ENCODE measurements at regions of chr5 and their contacts with region 1.

Region 1: GRCh38 chr5:95781101-95781583 is 41.4 kb downstream of the GLRX start:
- DNase-seq: peak; percentile 46 to 86 (median 73)
- ATAC-seq: peak; percentile 97
- H3K4me3 ChIP-seq: peak overlapping the region in 1 of 2 experiments; percentile 43
- H3K4me3 Mint-ChIP-seq: peak overlapping the region; percentile 78
- H3K27ac ChIP-seq: no peak overlapping the region
- H3K27ac Mint-ChIP-seq: peak overlapping the region; percentile 68
- H3K4me1 ChIP-seq: peaks cover 10% of the 10 kb centered on the region
- H3K4me1 Mint-ChIP-seq: peaks cover 14% of the 10 kb centered on the region
- H3K27me3 ChIP-seq: no peaks in the 10 kb centered on the region
- H3K27me3 Mint-ChIP-seq: no peaks in the 10 kb centered on the region
- CTCF ChIP-seq: peak; percentile 99

Region 2: DNA sequence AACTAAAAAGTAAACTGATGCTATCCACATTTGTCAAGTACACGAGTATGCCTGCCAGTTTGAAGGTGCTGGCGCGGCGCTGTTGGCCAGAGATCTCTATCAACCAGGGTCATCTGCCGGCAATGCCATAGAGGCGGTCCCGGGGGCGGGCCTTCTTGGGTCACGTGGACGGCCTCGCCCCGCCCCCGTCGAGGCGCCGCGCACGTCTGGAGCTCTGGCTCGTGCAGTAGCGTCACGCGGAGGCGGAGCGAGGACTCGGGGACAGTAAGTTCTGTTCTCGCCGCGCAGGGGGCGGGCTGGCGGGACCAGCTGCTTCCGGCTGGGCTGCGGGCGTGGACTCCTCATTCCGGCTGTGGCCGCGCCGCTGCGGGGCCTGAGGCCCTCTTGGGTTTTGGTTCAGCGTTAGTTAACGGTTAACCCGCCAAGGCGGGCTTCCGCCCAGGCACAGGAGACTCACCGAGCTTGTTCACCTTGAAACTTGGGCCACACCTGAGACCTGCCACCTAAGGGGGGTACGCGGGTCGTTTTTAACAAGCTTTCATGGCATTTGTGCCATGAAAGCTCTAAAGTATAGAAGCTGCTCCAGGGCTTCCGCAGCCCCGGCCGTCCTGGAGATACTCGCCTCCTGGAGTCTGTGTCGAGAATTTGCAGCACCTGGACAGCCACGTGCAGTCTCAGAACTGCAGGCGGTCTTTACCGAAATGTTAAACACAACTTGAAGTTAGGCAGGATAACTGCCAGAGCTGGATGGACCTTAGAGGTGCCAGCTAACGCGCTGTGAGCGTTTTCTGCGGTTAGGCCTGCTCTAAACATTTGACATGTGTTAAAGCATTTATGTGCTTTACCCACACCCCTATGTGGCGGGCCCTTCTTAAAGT is 134.3 kb before region 1 on chr5 and contains the start of gene RFESD:
- CTCF ChIA-PET with region 1: interaction called, 35 read pairs
- POLR2A ChIA-PET with region 1: no interaction called
- intact Hi-C with region 1: loop called in 1 of 2 experiments (anchors 1 kb)
- DNase-seq: peak; percentile 86 to 96 (median 93)
- ATAC-seq: peak; percentile 93
- H3K4me3 ChIP-seq: peak within 1 kb of the TSS; percentile 67 to 77
- H3K4me3 Mint-ChIP-seq: peak within 1 kb of the TSS; percentile 91
- H3K27ac ChIP-seq: peak within 1 kb of the TSS; percentile 76 to 85
- H3K27ac Mint-ChIP-seq: peak within 1 kb of the TSS; percentile 94
- H3K4me1 ChIP-seq: peaks cover 20% of the 10 kb centered on the region
- H3K4me1 Mint-ChIP-seq: peaks cover 40% of the 10 kb centered on the region
- H3K27me3 ChIP-seq: no peaks in the 10 kb centered on the region
- H3K27me3 Mint-ChIP-seq: no peaks in the 10 kb centered on the region
- CTCF ChIP-seq: peak; percentile 22
- total RNA-seq, gene RFESD: 1.00 to 1.7 TPM

Region 3: GRCh38 chr5:95794070-95794516 is 13.0 kb after region 1 on chr5:
- CTCF ChIA-PET with region 1: interaction called, 54 read pairs
- POLR2A ChIA-PET with region 1: no interaction called
- intact Hi-C with region 1: no loop called
- DNase-seq: no peak
- ATAC-seq: no peak
- H3K4me3 ChIP-seq: no peak overlapping the region
- H3K4me3 Mint-ChIP-seq: no peak overlapping the region
- H3K27ac ChIP-seq: no peak overlapping the region
- H3K27ac Mint-ChIP-seq: no peak overlapping the region
- H3K4me1 ChIP-seq: no peaks in the 10 kb centered on the region
- H3K4me1 Mint-ChIP-seq: no peaks in the 10 kb centered on the region
- H3K27me3 ChIP-seq: no peaks in the 10 kb centered on the region
- H3K27me3 Mint-ChIP-seq: no peaks in the 10 kb centered on the region
- CTCF ChIP-seq: no peak

Region 4: DNA sequence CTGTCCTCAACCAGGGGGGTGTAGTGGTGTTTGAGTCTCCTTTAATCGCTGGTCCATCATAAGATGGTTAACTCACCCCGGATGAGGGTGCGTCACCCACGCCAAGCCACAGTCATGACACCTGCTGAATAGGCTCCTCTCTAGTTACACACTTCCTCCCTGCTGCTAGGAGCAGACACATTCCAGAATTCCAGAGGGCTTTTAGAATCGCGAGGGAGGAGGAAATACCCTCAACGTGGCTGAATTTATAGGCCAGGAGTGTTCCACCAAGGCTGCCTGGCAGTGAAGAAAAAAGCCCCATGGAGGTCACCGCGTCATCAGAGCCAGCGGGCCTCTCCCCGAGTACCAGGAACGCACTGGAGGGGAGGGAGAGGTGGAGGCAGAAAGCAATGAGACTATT is 36.3 kb after region 1 on chr5:
- CTCF ChIA-PET with region 1: interaction called, 154 read pairs
- POLR2A ChIA-PET with region 1: interaction called, 6 read pairs
- intact Hi-C with region 1: loop called in 1 of 2 experiments (anchors 2 kb)
- DNase-seq: peak in 5 of 9 experiments; percentile 41 to 69 (median 52)
- ATAC-seq: peak; percentile 43
- H3K4me3 ChIP-seq: peak overlapping the region; percentile 41 to 53
- H3K4me3 Mint-ChIP-seq: peak overlapping the region; percentile 98
- H3K27ac ChIP-seq: peak overlapping the region; percentile 54 to 71
- H3K27ac Mint-ChIP-seq: peak overlapping the region; percentile 93
- H3K4me1 ChIP-seq: peaks cover 65% of the 10 kb centered on the region
- H3K4me1 Mint-ChIP-seq: peaks cover 74% of the 10 kb centered on the region
- H3K27me3 ChIP-seq: no peaks in the 10 kb centered on the region
- H3K27me3 Mint-ChIP-seq: no peaks in the 10 kb centered on the region
- CTCF ChIP-seq: no peak

Region 5: DNA sequence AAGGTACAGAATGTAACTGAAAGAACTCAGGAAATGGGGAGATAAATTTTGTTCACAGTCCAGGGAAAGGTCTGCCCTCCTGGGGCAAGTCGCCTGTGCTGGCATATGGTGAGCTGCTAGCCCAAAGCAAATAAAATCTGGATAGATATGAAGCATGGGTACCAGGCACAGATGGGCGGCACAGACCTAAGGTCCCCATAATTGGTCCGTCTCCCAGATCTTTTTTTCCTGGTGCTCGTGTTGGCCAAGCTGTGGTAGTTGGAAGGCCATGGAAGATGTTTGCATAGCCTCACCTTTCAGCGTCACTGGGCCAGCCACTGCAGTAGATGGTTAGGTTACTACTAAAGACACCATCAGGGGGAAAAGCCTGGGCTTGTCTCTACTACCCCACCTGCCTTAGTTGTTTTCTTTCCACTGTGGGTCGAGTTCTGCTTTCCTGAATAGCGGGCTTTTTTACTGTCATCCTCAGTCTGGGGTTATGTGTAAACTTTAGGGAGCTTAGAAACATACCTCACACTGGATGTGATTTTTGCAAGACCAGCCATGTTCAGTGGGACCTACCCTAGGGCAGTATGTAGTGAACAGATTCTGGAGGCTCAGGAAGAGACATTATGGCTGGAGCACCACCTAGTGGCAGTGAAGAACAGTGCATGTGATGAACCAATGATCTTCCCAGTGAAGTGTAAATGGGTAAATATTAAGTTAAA is 65.6 kb after region 1 on chr5:
- CTCF ChIA-PET with region 1: interaction called, 641 read pairs
- POLR2A ChIA-PET with region 1: interaction called, 9 read pairs
- intact Hi-C with region 1: loop called (anchors 1 kb)
- DNase-seq: peak; percentile 32 to 82 (median 64)
- ATAC-seq: peak; percentile 88
- H3K4me3 ChIP-seq: no peak overlapping the region
- H3K4me3 Mint-ChIP-seq: no peak overlapping the region
- H3K27ac ChIP-seq: no peak overlapping the region
- H3K27ac Mint-ChIP-seq: no peak overlapping the region
- H3K4me1 ChIP-seq: peaks cover 11% of the 10 kb centered on the region
- H3K4me1 Mint-ChIP-seq: peaks cover 10% of the 10 kb centered on the region
- H3K27me3 ChIP-seq: no peaks in the 10 kb centered on the region
- H3K27me3 Mint-ChIP-seq: no peaks in the 10 kb centered on the region
- CTCF ChIP-seq: peak; percentile 91

Region 6: GRCh38 chr5:95961617-95962474 is 180.7 kb after region 1 on chr5 and contains the start of gene ELL2:
- CTCF ChIA-PET with region 1: interaction called, 5 read pairs
- POLR2A ChIA-PET with region 1: interaction called, 3 read pairs
- intact Hi-C with region 1: loop called in 1 of 2 experiments (anchors 10 kb)
- DNase-seq: peak; percentile 88 to 99 (median 96)
- ATAC-seq: peak; percentile 89
- H3K4me3 ChIP-seq: peak within 1 kb of the TSS; percentile 64 to 82
- H3K4me3 Mint-ChIP-seq: peak within 1 kb of the TSS; percentile 96
- H3K27ac ChIP-seq: peak within 1 kb of the TSS; percentile 73 to 87
- H3K27ac Mint-ChIP-seq: peak within 1 kb of the TSS; percentile 99
- H3K4me1 ChIP-seq: peaks cover 12% of the 10 kb centered on the region
- H3K4me1 Mint-ChIP-seq: peaks cover 36% of the 10 kb centered on the region
- H3K27me3 ChIP-seq: no peaks in the 10 kb centered on the region
- H3K27me3 Mint-ChIP-seq: no peaks in the 10 kb centered on the region
- CTCF ChIP-seq: no peak
- total RNA-seq, gene ELL2: 189 to 200 TPM